ENCODE measurements at regions of chr2 and their contacts with region 1.

Region 1: DNA sequence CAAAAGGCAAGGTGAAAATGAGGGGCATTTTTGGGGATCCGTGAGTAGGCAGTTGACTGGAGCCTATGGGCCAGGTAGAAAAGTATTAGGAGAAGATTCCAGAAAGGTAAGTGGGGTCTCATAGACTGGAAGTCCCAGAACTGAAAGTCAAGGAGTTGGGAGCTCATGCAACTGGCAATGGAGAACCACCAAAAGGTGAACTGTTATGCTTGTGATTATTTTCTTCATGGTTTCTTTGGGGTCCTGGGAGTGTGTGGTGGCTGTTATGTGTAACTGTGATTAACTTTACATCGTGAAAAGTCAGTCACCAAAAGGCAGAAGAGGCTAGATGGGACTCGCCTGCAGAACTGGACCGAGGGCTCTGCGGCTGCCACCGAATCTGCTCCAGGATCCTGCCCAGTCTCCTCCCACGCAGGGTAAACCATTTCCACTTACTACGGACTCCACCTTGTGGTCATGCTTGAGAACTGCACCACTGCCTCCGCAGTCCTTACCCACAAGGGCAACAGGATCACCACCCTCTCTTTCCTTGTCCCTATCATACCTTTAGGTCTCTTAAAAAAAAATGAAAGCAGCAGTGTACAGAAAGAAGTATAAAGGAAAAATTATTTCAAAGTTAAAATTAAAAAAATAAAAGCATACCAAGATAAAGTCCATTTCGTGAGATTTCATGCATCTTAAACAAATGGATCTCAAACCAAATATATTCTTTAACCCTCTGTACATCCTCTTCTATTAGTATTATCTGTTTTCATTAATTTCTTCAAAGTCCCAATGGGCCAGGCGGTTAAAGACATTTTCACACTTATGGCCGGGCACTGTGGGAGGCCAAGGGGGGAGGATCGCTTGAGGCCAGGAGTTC is 15.6 kb upstream of the CEP68 start:
- DNase-seq: peak; percentile 86
- ATAC-seq: peak; percentile 97 to 98
- H3K4me3 ChIP-seq: peak overlapping the region; percentile 27
- H3K27ac ChIP-seq: no peak overlapping the region
- H3K4me1 ChIP-seq: no peaks in the 10 kb centered on the region
- H3K27me3 ChIP-seq: no peaks in the 10 kb centered on the region
- CTCF ChIP-seq: peak; percentile 97

Region 2: DNA sequence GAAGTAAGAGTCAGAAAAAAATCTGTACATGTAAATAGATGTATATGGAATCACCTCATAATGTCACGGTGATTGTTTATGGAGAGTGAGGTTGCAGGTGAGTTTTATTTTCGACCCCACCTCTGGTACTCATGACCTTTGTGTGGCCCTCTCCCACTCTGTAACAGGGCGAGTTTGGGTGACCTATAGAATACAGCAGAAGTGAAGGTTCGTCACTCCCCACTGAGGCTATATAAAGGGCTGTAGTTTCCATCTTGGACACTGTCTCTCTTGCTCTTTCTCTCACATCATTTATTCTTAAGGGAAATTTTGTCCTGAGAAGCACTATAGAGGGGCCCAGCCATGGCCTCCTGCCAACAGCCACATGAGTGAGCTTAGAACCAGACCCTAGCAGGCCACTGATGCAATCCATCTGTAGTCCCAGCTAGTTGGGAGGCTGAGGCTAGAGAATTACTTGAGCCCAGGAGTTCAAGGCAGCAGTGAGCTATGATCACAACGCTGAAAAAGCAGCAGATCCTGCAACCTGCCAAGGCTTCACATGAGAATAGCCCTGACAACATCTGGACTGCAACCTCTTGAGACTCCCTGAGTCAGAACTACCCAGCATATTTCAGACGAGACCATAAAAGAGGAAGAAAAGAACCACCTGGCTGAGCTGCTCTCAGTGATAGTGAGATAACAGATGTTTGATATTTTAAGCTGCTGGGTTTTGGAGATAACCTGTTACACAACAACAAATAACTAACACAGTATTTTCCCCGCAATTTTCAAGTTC is 125.7 kb before region 1 on chr2:
- intact Hi-C with region 1: loop called (anchors 5 kb)
- DNase-seq: no peak
- ATAC-seq: no peak
- H3K4me3 ChIP-seq: no peak overlapping the region
- H3K27ac ChIP-seq: no peak overlapping the region
- H3K4me1 ChIP-seq: no peaks in the 10 kb centered on the region
- H3K27me3 ChIP-seq: no peaks in the 10 kb centered on the region
- CTCF ChIP-seq: no peak